HEK293T (cell line): ENCODE measurements at regions of chr20 and their contacts with region 1.

Region 1: GRCh38 chr20:63864847-63865640 is at the start of gene TPD52L2:
- DNase-seq: peak; percentile 97

Region 2: DNA sequence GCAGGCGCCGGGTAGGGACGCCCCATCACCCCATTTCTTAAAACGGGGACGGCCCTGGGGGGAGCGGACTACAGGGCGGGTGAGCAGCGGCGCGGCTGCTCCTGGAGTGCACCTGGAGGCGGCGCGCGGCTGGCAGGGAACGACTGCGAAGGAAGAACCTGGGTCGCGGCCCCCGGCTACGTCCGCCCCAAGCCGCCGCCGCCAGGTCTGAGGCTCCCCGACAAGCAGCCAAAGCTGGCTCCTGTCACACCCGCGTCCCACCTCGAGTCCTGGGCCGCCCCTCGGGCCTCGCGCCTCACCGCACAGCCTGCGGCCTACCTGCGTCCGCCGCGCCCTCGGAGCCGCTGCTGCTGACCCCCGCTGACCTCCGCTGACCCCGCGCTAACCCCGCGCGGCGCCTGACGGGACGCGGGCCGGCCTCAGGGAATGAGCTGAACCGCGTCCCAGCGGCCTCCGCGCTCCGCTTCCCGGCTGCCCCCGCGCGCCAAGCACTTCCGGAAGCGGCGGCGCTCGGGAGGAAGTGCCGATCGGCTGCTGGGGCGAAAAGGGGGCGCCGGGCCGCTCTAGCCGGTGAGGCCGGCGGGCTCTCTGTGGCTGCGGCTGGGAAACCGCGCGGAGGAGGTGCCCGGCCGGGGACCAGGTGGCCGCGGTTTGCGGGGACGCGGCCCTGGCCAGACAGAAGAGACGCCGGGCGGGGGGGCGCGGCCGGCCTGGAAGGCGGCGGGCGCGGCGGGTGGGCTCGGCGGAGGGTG is 157.3 kb before region 1 on chr20 and contains the starts of genes ARFRP1 and ZGPAT:
- CTCF ChIA-PET with region 1: no interaction called
- POLR2A ChIA-PET with region 1: interaction called, 17 read pairs
- DNase-seq: peak; percentile 91

Region 3: GRCh38 chr20:63718996-63719395 is 146.0 kb before region 1 on chr20:
- CTCF ChIA-PET with region 1: no interaction called
- POLR2A ChIA-PET with region 1: no interaction called
- DNase-seq: no peak

Region 4: DNA sequence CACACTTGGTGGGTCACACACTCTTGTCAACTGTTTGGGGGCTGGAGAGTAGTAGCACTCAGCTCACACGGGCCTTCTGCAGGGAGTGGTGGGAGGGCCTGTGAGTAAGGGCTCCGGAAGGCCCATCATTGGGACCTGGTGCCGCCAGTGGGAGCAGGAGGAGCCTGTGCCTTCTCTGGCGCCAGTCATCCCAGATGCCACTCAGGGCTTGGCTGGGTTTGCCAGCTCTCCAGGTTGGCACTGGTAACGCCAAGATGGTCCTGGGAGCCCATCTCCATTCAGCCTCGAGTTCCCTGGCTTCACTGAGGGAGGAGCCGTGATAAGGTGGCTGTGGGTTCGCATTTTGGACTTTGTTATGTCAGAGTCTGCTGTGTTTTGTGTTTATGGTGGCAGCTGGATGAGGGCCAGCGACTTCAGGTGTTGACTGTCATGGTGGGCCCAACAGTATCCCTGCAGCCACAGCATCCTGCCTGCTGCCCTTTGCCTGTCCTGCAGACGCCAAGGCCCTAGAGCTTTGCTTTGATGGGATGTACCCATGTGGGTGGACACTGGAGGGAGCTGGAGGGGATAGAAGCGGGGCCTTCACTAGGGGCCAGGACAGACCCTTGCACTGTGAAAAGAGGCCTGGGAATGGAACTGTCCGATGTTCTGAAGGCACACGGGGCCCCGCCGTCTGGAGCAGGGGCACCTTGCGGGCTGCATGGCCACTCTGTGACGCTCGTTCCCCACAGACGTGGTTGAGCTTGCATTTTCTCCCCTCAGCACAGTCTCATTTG is 16.6 kb after region 1 on chr20:
- CTCF ChIA-PET with region 1: interaction called, 3 read pairs
- POLR2A ChIA-PET with region 1: interaction called, 30 read pairs
- DNase-seq: no peak

Region 5: DNA sequence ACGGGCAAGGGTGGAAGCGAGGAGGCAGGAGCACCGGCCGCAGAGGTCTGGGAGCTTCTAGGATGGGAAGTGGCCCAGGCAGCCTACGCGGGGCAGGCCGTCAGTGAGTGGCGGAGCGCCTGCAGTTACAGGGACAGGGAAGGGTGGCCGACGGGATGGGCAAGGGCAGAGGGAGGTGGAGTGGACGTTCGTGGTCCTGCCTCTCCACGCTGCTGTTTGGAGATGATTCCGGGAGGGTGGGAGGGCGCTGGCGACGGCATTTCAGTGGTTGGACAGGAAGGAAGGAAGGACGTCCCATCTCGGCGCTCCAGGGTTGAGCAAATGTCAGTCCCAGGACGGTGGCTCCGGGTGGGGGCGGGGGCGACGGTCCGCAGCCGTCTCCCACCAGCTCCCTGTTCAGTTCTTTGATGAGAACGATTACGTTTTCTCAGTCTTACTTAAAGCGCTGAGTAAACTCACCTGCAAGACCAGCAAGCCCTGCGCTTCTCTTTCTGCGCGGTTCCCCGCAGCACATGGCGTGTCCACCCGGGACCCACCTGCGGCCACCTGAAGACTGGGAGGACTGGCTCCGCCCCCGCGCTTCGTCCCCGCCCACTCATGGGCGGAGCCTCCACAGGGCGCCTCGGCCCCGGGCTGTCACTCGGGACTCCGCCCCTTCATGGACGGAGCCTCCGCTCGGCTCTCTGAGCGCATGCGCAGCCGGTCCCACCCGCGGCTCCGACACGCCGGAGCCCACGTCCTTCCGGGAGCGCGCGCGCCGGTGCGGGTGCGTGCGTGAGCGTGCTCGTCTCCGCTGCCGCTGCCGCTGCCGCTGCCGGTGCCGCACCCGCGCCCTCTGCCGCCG is 29.5 kb after region 1 on chr20 and contains the start of gene DNAJC5:
- CTCF ChIA-PET with region 1: no interaction called
- POLR2A ChIA-PET with region 1: interaction called, 10 read pairs
- DNase-seq: peak; percentile 100

Region 6: GRCh38 chr20:63908008-63908624 is 43.1 kb after region 1 on chr20:
- CTCF ChIA-PET with region 1: no interaction called
- POLR2A ChIA-PET with region 1: no interaction called
- DNase-seq: no peak

Region 7: DNA sequence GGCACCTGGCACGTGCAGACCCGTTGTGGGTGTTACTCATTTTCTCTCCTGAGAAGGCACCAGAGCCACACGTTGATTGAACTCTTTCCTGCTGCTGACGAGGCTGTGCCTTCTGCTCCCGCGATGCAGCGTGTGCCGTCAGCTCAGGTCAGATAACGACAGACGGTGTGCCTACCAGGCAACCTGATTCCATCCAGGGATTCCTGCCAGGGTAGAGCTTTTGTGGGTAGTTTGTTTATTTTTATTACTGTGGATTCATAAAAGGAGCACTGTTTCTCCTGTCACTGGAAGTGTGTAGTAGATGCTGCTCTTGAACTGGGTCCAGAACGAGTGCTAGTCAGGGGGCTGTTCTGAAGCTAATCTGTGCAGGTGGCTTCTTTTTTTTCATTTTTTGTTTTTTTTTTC is 136.6 kb after region 1 on chr20:
- CTCF ChIA-PET with region 1: no interaction called
- POLR2A ChIA-PET with region 1: no interaction called
- DNase-seq: no peak